T-cell (primary cell): ENCODE measurements at regions of chr10 and their contacts with region 1.

Region 1: DNA sequence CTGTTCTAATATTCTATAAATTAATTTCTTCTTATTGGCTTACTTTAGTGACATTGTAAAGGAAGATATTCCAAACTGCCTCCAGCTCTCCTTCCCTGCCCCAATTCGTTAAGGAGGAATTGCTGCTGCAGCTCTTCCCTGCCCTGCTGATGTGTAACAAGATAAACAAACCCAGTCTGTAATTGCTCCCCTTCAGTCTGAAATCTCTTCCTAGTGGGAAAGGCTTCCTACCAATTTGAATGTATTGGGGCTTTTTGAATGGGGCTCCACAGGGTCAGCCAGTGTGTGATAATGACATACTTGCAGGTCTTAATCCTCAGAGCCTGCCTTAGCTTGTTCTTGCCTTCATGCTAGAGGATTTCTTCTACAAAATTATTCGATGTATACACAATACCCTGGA is 849.9 kb upstream of the GHITM start:
- DNase-seq: no peak
- ATAC-seq: no peak
- H3K4me3 ChIP-seq: no peak overlapping the region
- H3K4me3 Mint-ChIP-seq: no peak overlapping the region
- H3K27ac ChIP-seq: no peak overlapping the region
- H3K27ac Mint-ChIP-seq: no peak overlapping the region
- H3K4me1 ChIP-seq: no peaks in the 10 kb centered on the region
- H3K4me1 Mint-ChIP-seq: no peaks in the 10 kb centered on the region
- H3K27me3 ChIP-seq: no peaks in the 10 kb centered on the region
- H3K27me3 Mint-ChIP-seq: no peaks in the 10 kb centered on the region

Region 2: GRCh38 chr10:83229991-83230390 is 59.4 kb before region 1 on chr10:
- CTCF ChIA-PET with region 1: no interaction called
- POLR2A ChIA-PET with region 1: interaction called in 1 of 2 experiments, 15 read pairs
- DNase-seq: no peak
- ATAC-seq: no peak
- H3K4me3 ChIP-seq: no peak overlapping the region
- H3K4me3 Mint-ChIP-seq: no peak overlapping the region
- H3K27ac ChIP-seq: no peak overlapping the region
- H3K27ac Mint-ChIP-seq: no peak overlapping the region
- H3K4me1 ChIP-seq: no peaks in the 10 kb centered on the region
- H3K4me1 Mint-ChIP-seq: no peaks in the 10 kb centered on the region
- H3K27me3 ChIP-seq: no peaks in the 10 kb centered on the region
- H3K27me3 Mint-ChIP-seq: no peaks in the 10 kb centered on the region

Region 3: DNA sequence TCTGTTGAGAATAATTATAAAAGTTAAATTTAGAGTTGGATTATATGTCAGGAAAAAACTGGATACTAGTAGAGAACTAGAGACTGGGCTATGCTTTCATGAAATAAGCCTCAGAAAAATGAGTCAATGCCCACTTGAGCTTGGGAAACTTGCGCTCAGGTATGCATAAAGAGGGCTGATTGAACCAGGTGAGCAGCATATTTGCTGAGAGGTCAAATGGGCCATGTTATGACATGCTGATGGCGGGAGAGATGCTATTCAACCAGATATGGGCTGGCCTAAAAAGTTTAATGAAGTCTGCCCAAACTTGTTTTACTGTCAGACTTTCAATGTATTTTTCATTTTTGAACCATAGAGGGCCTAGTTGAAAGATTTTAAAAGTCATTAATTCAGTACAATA is 12.4 kb after region 1 on chr10:
- CTCF ChIA-PET with region 1: no interaction called
- POLR2A ChIA-PET with region 1: no interaction called
- DNase-seq: no peak
- ATAC-seq: no peak
- H3K4me3 ChIP-seq: no peak overlapping the region
- H3K4me3 Mint-ChIP-seq: no peak overlapping the region
- H3K27ac ChIP-seq: no peak overlapping the region
- H3K27ac Mint-ChIP-seq: no peak overlapping the region
- H3K4me1 ChIP-seq: no peaks in the 10 kb centered on the region
- H3K4me1 Mint-ChIP-seq: no peaks in the 10 kb centered on the region
- H3K27me3 ChIP-seq: no peaks in the 10 kb centered on the region
- H3K27me3 Mint-ChIP-seq: no peaks in the 10 kb centered on the region